ENCODE measurements at regions of chr14 and their contacts with region 1.

Region 1: GRCh38 chr14:58297762-58298476 is 436 bp upstream of the ARID4A start:
- DNase-seq: peak; percentile 97
- H3K4me3 Mint-ChIP-seq: no peak overlapping the region
- H3K27ac Mint-ChIP-seq: no peak overlapping the region
- H3K4me1 Mint-ChIP-seq: peaks cover 53% of the 10 kb centered on the region
- H3K27me3 Mint-ChIP-seq: no peaks in the 10 kb centered on the region

Region 2: GRCh38 chr14:57268161-57269069 is 1029.5 kb before region 1 on chr14 and contains the starts of genes AP5M1 and EXOC5:
- intact Hi-C with region 1: loop called (anchors 5 kb)
- DNase-seq: peak; percentile 92
- H3K4me3 Mint-ChIP-seq: peak within 1 kb of the TSS; percentile 99
- H3K27ac Mint-ChIP-seq: peak within 1 kb of the TSS; percentile 100
- H3K4me1 Mint-ChIP-seq: peaks cover 60% of the 10 kb centered on the region
- H3K27me3 Mint-ChIP-seq: no peaks in the 10 kb centered on the region
- total RNA-seq, gene AP5M1: 38.7 and 48.2 TPM in 2 replicates
- total RNA-seq, gene EXOC5: 75.9 and 76.6 TPM in 2 replicates

Region 3: DNA sequence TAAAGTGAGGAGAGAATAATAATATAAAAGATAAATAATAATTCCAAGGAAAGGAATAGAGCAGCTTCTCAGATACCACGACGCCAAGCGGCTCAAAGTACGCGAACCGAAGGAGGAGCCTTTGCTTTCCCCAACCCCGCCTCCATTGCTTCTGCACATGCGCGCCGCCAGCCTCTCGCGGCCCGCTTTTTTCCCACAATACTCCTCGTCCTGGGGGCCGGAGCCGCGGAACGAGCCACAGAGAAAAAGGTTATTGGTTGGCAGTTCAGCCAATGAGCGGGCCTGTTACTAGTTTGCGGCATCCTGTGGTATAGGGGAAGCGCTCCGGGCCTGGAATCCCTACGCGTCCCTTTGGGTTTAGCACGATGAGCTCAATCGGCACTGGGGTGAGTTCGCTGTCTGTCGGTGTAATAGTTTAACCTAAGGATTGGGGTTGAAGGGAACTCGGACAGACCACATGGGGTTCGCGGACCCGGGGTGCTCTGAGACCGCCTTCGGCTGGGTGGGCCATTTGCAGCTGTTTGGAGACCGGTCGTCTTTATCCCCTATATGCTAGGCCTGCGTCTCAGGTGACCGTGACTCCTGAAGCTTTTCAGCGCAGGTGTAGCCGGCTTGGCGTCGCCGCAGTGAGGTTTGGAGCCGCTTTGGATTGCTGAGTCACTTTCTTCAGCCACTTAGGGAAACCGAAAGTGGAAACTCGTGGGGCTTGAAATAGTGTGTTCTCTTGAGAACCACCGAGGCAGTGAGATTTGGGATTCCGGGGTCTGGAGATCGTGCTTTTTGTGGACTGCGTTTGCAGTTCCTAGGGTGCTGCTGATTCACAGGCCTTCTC is 53.1 kb before region 1 on chr14 and contains the start of gene PSMA3:
- intact Hi-C with region 1: loop called (anchors 1 kb)
- DNase-seq: peak; percentile 97
- H3K4me3 Mint-ChIP-seq: peak within 1 kb of the TSS; percentile 95
- H3K27ac Mint-ChIP-seq: peak within 1 kb of the TSS; percentile 94
- H3K4me1 Mint-ChIP-seq: peaks cover 43% of the 10 kb centered on the region
- H3K27me3 Mint-ChIP-seq: no peaks in the 10 kb centered on the region
- total RNA-seq, gene PSMA3: 453 and 500 TPM in 2 replicates

Region 4: DNA sequence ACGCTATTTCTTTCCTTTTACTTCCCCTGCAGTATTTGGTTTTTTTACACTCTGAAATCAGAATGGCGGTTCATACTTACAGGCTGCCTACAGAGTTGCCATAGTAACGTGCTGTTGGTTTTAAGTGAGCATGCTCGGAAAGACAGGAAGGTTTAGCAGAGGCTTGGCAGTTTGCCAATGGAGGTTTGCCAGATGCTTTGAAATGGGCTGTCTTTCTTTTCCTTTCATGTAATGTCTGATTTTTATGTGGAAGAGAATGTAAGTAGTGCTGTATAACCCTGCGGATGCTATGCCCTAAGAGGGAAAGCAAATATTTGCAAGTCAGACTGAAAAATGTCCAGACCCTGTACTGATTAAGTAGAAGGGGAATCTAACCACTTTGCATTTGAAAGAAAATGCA is 33.2 kb after region 1 on chr14:
- intact Hi-C with region 1: loop called (anchors 1 kb)
- DNase-seq: peak; percentile 84
- H3K4me3 Mint-ChIP-seq: peak overlapping the region; percentile 64
- H3K27ac Mint-ChIP-seq: peak overlapping the region; percentile 91
- H3K4me1 Mint-ChIP-seq: peaks cover 19% of the 10 kb centered on the region
- H3K27me3 Mint-ChIP-seq: no peaks in the 10 kb centered on the region

Region 5: DNA sequence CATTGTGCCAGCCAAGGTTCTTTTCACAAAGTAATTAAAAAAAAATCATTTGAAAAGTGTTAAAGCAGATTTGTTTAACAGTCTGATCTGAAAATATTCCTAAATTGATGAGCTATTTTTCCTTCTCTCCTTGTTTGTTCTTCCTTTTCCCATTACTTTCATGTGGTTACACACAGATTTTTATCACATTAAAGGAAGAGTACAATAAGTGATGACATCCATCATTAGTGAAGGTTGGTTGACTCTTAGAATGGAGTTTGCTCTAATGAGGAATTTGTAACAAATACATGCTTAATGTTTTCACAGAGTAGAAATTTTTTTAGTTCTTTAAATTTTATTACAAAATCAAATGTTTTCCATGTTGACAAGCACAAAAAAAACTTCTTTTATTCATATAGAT is 78.9 kb after region 1 on chr14:
- intact Hi-C with region 1: no loop called
- DNase-seq: no peak
- H3K4me3 Mint-ChIP-seq: no peak overlapping the region
- H3K27ac Mint-ChIP-seq: no peak overlapping the region
- H3K4me1 Mint-ChIP-seq: no peaks in the 10 kb centered on the region
- H3K27me3 Mint-ChIP-seq: no peaks in the 10 kb centered on the region

Region 6: DNA sequence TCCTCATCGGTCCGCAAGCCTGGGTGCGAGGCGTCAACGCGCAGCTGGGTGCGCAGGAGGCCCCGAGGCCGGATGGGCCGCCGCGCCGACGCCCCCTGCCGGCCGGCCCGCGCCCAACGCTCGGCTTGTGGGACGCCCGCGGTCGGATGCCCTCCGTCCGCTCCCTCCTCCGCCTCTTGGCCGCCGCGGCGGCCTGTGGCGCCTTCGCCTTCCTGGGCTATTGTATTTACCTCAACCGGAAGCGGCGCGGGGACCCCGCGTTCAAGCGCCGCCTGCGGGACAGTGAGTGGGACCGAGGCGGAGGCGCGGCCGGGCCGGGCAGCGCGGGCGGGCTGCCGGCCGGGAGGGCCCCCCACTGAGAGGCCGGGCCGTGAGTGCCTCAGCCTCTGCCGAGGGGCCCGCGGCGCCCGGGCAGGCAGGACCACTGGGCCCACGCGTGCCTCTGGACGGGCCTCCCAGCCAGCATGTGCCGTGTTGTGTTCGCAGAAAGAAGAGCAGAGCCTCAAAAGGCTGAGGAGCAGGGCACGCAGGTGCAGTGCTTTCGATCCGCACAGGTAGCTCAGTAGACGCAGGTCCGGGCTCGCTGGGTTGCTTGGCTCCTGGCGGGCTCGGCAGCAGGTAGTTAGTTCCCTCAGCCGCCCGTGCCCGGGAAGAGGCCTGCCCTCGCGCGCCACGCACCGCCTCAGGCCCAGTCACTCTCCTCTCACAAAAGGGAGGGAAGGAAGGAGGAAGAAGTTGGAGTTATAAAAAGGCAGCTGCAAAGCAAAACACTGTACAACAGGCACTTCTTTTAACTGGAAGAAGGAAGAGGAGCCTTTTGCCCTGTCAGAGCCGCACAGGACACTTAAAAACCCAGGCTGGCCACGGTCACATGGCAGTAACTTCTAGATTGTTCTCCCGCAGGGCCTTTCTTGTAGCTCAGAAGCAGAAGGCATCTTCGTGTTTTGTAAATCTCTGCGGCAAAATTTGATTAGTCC is 98.2 kb after region 1 on chr14 and contains the start of gene TOMM20L:
- intact Hi-C with region 1: loop called (anchors 1 kb)
- DNase-seq: peak; percentile 66
- H3K4me3 Mint-ChIP-seq: peak within 1 kb of the TSS; percentile 67
- H3K27ac Mint-ChIP-seq: peak within 1 kb of the TSS; percentile 7
- H3K4me1 Mint-ChIP-seq: peaks cover 13% of the 10 kb centered on the region
- H3K27me3 Mint-ChIP-seq: peaks cover 6% of the 10 kb centered on the region
- total RNA-seq, gene TOMM20L: not detected in 2 replicates

Region 7: DNA sequence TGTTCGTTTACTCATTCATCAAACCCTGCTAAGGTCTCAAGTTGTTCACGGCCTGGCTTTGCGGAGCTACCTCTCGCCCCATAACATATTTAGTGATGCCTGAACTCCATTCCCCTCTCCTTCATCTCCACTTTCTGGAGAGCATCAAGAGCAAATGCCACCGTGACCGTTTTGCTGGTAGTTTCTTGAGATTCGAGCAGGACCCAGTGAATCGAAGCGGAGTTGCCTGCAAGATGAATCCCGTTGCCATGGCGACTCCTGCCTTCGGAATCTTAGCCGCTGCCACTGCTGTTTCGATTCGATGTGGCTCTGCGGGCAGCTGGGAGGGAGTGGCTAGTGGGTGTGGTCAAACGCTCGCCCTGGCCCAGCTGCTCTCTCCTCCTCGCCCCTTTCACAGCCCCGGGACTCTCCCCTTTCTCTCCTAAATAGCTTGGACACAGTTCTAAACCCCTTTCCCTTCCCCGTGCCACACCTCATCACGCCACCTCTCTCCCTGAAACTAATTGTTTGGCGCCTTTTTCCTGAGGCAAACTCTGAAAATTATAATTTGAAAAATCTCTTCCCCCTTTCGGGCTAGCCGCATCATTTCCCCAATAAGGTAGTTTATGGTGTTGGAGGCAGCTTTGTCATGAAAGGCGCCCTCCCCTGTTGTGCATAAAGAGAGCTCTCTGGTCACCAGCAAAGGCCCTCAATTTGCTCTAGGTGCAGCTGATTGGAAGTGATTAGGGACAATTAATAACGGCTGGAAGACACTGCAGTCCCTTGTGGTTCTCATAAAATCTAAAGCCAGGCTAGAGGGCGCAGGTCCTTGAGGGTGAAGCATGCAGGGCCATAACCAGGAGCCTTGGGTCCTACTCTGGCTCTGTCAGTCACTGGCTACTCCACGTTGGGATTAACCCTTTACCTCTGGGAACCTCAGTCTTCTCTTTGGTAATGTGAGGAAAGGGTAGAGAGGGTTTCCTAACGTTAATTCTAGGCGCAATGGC is 892.2 kb after region 1 on chr14:
- intact Hi-C with region 1: loop called (anchors 2 kb)
- DNase-seq: peak; percentile 73
- H3K4me3 Mint-ChIP-seq: peak overlapping the region; percentile 96
- H3K27ac Mint-ChIP-seq: peak overlapping the region; percentile 87
- H3K4me1 Mint-ChIP-seq: peaks cover 11% of the 10 kb centered on the region
- H3K27me3 Mint-ChIP-seq: peaks cover 17% of the 10 kb centered on the region

Measured in activated T-helper 1 cell treated with anti-CD3 and anti-CD28 coated beads, Interleukin-12 subunit alpha, Interleukin-12 subunit beta, Interleukin-2, Interleukin-4 antibody, amounts not matched to agents 30 ng/mL and 10 ng/mL and 1 ng/mL, durations not matched to agents 14 hours and 24 hours and 36 hours (primary cell).